Spleen (tissue), 13 donors: ENCODE measurements at regions of chr5 and their contacts with region 1.

Region 1: DNA sequence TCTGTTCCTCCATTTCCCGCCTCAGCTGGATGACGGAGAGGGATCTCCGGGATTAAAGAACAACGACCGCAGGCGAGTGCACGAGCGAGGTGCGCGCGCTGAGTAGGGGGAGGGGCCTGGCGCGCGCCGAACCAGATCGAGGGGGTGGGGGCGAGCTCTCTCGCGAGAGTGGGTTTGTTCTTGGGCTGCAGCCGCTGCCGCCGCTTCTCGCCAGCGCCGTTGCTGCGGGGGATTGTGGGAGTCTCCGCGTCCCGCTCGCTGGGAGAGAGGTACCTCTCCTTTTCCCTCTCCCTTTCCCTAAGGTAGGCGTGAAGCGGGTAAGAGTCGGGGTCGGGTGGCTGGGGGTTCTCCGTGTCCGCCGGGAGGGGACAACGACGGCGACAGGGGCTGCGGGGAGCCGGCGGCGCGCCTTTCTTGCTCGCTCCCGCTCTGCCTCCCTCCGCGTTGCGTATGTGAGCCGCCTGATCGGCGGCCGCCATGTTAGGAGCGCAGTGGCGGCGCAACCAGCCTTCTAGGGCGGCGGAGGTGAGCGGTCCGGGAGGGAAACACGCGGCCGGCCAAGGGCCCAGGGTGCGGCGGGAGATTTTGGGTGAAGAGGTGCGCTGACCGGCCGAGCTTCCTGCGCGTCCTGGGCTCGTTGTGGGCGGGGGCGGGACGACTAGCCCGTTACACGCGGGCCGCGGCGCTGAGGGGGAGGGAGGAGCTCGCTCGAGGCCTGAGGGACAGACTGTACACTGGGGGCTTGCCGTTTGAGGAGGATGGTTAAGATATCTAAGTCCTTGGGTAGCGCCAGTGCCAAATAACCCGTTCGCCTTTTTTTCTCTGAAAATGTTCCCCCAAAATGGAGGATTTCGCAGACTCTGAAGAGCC is at the start of gene MATR3:
- DNase-seq: peak; percentile 98
- H3K4me3 ChIP-seq: peak within 1 kb of the TSS; percentile 59 to 86 (median 76)
- H3K27ac ChIP-seq: peak within 1 kb of the TSS; percentile 99 to 100 (median 100)
- H3K4me1 ChIP-seq: peaks cover 37 to 49% (median 45%) of the 10 kb centered on the region in 6 donors
- H3K27me3 ChIP-seq: no peaks in the 10 kb centered on the region
- CTCF ChIP-seq: peak in 5 of 11 experiments; percentile 12 to 39 (median 35)
- POLR2A ChIP-seq: peak; percentile 91 to 94 (median 92)
- total RNA-seq, gene MATR3: 170 to 251 (median 219) TPM

Region 2: GRCh38 chr5:139389701-139390638 is 96.2 kb after region 1 on chr5 and contains the start of gene MZB1:
- intact Hi-C with region 1: loop called (anchors 10 kb)
- DNase-seq: peak; percentile 91
- H3K4me3 ChIP-seq: peak within 1 kb of the TSS in 7 of 8 donors; percentile 23 to 70 (median 28)
- H3K27ac ChIP-seq: peak within 1 kb of the TSS; percentile 30 to 91 (median 78)
- H3K4me1 ChIP-seq: peaks cover 31 to 100% (median 93%) of the 10 kb centered on the region in 6 donors
- H3K27me3 ChIP-seq: peaks cover 0 to 33% (median 15%) of the 10 kb centered on the region in 7 donors
- CTCF ChIP-seq: no peak
- POLR2A ChIP-seq: peak in 1 of 3 donors; percentile 74
- total RNA-seq, gene MZB1: 72.6 to 273 (median 97.8) TPM

Region 3: DNA sequence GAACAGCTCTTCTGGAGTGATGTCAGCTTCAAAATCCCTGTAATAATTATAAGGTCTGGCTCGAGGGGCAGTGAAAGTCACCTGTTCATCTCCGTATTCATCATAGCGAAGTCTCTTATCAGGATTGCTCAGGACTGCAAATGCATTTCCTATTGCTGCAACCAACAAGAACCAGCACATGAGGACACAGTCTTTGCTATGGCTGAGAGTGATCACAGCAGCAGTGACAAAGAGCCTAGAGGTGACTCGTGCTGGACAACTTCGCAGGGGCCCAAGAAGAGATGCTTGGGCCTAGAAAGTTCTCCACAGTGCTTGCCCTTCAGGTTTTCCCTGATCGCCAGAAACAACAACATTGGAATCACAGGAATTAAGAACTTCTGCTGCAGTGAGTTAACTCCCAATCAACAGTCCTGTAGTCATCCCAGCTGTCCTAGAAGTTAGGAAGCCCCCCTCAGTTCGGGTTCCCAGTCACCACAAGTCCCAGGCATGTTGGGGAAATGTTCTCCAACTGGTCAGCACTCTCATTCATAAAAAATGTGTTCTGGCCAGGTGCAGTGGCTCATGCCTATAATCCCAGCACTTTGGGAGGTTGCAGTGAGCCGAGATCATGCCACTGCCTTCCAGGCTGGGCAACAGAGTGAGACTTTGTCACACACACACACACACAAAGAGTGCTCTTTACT is 132.6 kb after region 1 on chr5:
- intact Hi-C with region 1: no loop called
- DNase-seq: no peak
- H3K4me3 ChIP-seq: no peak overlapping the region
- H3K27ac ChIP-seq: no peak overlapping the region
- H3K4me1 ChIP-seq: peaks cover 0 to 7% (median 3%) of the 10 kb centered on the region in 6 donors
- H3K27me3 ChIP-seq: no peaks in the 10 kb centered on the region
- CTCF ChIP-seq: no peak
- POLR2A ChIP-seq: no peak